ENCODE measurements at regions of chr11 and their contacts with region 1.

Region 1: DNA sequence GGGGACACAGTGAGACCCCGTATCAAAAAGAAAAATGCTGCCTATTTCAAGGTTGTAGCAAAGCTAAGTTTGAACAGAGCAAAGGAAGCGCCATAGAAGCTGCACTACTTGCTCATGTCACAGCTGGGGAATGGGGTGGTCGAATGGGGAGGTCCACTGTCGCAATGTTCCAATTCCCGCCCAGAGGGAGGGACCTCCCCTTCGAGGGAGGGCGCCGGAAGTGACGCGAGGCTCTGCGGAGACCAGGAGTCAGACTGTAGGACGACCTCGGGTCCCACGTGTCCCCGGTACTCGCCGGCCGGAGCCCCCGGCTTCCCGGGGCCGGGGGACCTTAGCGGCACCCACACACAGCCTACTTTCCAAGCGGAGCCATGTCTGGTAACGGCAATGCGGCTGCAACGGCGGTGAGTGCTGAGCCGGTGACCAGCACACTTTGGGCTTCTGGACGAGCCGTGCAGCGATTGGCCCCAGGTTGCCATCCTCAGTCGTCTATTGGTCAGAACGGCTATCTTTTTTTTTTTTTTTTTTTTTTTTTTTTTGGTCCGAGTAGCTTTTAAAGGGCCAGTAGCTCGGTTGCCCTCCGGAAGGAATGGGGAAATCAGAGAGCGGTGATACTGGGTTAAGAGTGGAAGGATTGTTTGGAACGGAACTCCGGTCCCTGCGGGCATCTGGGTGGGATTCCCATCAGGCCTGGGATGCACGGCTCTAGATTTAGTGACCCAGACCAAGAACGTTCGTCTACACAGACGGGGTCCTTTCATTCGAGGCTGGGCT is at the start of gene HMBS:
- DNase-seq: peak; percentile 95
- H3K4me3 ChIP-seq: peak within 1 kb of the TSS; percentile 77
- H3K27ac ChIP-seq: peak within 1 kb of the TSS; percentile 66
- H3K4me1 ChIP-seq: peaks cover 29% of the 10 kb centered on the region
- CTCF ChIP-seq: no peak
- total RNA-seq, gene HMBS: 12.1 and 12.2 TPM in 2 replicates

Region 2: DNA sequence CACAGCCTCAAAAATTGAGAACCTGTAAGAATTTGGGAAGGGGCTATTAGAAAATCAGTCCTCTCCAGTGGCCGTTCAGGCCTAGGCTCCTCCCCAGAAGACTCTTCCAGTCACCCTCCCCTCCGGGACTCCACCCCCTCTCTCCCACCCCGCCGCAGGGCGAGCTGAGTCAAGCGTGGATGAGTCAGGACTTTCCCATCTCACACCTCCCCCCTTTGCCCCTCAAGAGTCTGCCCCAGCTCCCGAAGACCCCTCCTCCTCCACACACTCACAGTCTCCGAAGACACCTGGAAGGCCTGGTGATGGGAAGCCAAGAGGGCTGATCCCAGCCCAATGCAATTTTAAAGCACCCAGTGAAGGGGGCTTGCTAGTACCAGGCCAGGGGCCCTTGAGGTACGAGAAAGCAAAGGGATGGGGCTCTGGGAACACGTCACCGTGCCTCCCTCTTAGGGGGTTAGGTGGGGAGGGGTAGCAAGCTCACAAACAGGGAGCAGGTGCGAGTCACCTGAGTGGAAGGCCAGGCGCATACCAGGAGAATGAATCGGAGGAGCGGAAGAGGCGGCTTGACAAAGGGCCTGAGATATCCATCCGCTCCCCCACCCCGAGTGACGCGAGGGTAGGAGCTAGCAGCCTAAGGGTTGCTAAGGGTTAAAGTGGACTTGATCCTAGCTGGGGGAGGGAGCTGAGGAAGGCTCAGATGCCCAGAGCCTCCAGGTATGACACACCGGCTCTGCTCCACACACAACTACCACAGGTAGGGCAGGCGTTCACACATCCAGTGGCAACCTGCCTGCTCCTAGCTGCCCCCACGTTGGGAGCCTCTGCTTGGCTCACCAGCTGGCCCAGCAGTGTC is 172.7 kb before region 1 on chr11:
- CTCF ChIA-PET with region 1: no interaction called
- POLR2A ChIA-PET with region 1: no interaction called
- intact Hi-C with region 1: no loop called
- DNase-seq: no peak
- H3K4me3 ChIP-seq: no peak overlapping the region
- H3K27ac ChIP-seq: peak overlapping the region; percentile 88
- H3K4me1 ChIP-seq: peaks cover 80% of the 10 kb centered on the region
- CTCF ChIP-seq: no peak

Region 3: GRCh38 chr11:119006656-119007055 is 78.2 kb before region 1 on chr11:
- CTCF ChIA-PET with region 1: no interaction called
- POLR2A ChIA-PET with region 1: no interaction called
- intact Hi-C with region 1: no loop called
- DNase-seq: no peak
- H3K4me3 ChIP-seq: no peak overlapping the region
- H3K27ac ChIP-seq: no peak overlapping the region
- H3K4me1 ChIP-seq: no peaks in the 10 kb centered on the region
- CTCF ChIP-seq: no peak

Region 4: GRCh38 chr11:119067371-119068222 is 17.3 kb before region 1 on chr11 and contains the start of gene VPS11:
- CTCF ChIA-PET with region 1: no interaction called
- POLR2A ChIA-PET with region 1: interaction called, 22 read pairs
- intact Hi-C with region 1: loop called (anchors 1 kb)
- DNase-seq: peak; percentile 98
- H3K4me3 ChIP-seq: peak within 1 kb of the TSS; percentile 83
- H3K27ac ChIP-seq: peak within 1 kb of the TSS; percentile 75
- H3K4me1 ChIP-seq: peaks cover 23% of the 10 kb centered on the region
- CTCF ChIP-seq: no peak
- total RNA-seq, gene VPS11: 32.2 and 46.1 TPM in 2 replicates